H1 (cell line): ENCODE measurements at regions of chr20 and their contacts with region 1.

Region 1: GRCh38 chr20:9903048-9903655 is 64.3 kb upstream of the PAK5 start:
- DNase-seq: peak in 1 of 2 experiments; percentile 60
- H3K4me3 ChIP-seq: no peak overlapping the region
- H3K27ac ChIP-seq: no peak overlapping the region
- H3K4me1 ChIP-seq: no peaks in the 10 kb centered on the region
- H3K27me3 ChIP-seq: no peaks in the 10 kb centered on the region
- CTCF ChIP-seq: peak in 2 of 3 experiments; percentile 68 to 81; a peak in 3 of 4 replicates
- EP300 ChIP-seq: no peak
- POLR2A ChIP-seq: no peak
- RAD21 ChIP-seq: peak; percentile 46 to 61; a peak in 3 of 4 replicates

Region 2: DNA sequence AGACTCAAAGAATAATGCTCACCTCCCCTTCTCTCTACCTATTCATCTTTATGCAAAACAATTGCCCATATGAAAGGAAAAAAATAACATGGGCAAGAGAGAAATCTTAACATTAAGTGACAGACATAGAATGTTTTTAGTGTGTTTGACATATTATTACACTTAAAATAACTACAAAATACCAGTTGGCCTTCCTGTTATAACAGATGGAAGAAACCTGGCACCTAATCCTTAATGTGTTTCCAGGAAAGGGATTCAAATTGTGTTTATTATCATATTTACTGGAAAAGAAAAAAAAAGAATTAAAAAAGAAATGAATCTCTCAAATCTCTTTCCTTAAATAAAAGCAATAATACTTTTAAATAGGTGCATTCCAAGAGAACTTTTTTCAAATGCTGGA is 230.2 kb before region 1 on chr20:
- CTCF ChIA-PET with region 1: interaction called, 10 read pairs
- POLR2A ChIA-PET with region 1: no interaction called
- DNase-seq: no peak
- H3K4me3 ChIP-seq: no peak overlapping the region
- H3K27ac ChIP-seq: no peak overlapping the region
- H3K4me1 ChIP-seq: no peaks in the 10 kb centered on the region
- H3K27me3 ChIP-seq: no peaks in the 10 kb centered on the region
- CTCF ChIP-seq: no peak
- EP300 ChIP-seq: no peak
- POLR2A ChIP-seq: no peak
- RAD21 ChIP-seq: no peak

Region 3: GRCh38 chr20:9800421-9800820 is 102.7 kb before region 1 on chr20:
- CTCF ChIA-PET with region 1: no interaction called
- POLR2A ChIA-PET with region 1: no interaction called
- DNase-seq: no peak
- H3K4me3 ChIP-seq: no peak overlapping the region
- H3K27ac ChIP-seq: no peak overlapping the region
- H3K4me1 ChIP-seq: no peaks in the 10 kb centered on the region
- H3K27me3 ChIP-seq: no peaks in the 10 kb centered on the region
- CTCF ChIP-seq: no peak
- EP300 ChIP-seq: no peak
- POLR2A ChIP-seq: no peak
- RAD21 ChIP-seq: no peak

Region 4: DNA sequence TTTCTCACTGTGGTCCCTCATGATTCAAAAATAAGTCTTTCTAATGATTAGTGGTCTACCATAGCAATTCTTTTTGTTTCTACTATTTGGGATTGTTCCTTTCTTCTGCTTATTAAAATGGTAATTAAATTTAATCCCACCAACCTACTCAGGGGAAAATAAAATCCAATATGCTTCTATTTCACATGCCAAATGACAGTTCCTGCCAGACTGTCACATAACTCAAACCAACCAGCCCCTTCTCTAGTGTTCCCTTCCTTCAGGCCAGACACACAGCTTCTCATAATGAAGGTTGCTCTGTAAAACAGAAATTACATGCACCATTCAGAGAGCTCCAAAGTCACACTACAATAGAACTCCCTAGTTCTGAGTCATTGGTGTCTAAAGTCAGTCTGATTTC is 87.5 kb before region 1 on chr20:
- CTCF ChIA-PET with region 1: interaction called, 10 read pairs
- POLR2A ChIA-PET with region 1: no interaction called
- DNase-seq: no peak
- H3K4me3 ChIP-seq: no peak overlapping the region
- H3K27ac ChIP-seq: no peak overlapping the region
- H3K4me1 ChIP-seq: no peaks in the 10 kb centered on the region
- H3K27me3 ChIP-seq: no peaks in the 10 kb centered on the region
- CTCF ChIP-seq: no peak
- EP300 ChIP-seq: no peak
- POLR2A ChIP-seq: no peak
- RAD21 ChIP-seq: no peak

Region 5: DNA sequence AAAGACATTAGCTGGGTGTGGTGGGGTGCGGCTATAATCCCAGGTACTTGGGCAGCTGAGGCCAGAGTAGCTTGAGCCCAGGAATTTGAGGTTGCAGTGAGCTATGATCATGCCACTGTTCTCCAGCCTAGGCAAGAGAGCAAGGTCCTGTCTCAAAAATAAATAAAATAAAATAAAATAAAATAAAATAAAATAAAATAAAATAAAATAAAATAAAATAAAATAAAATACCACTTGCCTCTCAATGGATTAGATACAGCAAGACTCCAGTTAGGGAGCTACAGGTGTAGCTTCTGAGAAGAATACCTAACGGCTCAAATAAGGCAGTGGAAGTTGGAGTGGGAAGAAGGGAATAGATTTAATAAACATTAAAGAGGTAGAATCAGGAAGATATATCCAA is 50.6 kb before region 1 on chr20:
- CTCF ChIA-PET with region 1: interaction called, 10 read pairs
- POLR2A ChIA-PET with region 1: no interaction called
- DNase-seq: no peak
- H3K4me3 ChIP-seq: no peak overlapping the region
- H3K27ac ChIP-seq: no peak overlapping the region
- H3K4me1 ChIP-seq: no peaks in the 10 kb centered on the region
- H3K27me3 ChIP-seq: no peaks in the 10 kb centered on the region
- CTCF ChIP-seq: no peak
- EP300 ChIP-seq: no peak
- POLR2A ChIP-seq: no peak
- RAD21 ChIP-seq: no peak

Region 6: DNA sequence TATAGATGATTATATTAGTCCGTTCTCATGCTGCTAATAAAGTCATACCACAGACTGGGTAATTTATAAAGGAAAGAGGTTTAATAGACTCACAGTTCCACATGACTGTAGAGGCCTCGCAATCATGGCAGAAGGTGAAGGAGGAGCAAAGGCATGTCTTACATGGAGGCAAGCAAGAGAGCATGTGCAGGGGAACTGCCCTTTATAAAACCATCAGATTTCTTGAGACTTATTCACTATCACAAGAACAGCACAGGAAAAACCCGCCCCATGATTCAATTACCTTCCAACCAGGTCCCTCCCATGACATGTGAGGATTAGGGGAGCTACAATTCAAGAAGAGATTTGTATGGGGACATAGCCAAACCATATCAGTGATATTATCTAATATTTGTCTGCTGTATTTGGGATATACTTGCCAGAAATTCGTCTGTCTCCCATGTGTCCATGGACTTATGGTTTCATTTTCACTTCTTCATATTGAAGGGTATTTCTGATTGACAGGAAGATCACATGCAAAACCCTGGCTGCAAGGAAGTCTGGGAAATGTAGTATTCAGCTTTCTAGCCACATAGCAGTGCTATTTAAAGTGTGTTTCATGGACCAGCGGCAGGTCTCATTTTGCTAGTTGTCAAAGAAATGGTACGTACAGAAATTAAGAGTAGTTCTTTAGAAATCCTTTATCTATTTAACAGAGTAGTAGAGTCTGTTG is 13.7 kb before region 1 on chr20:
- CTCF ChIA-PET with region 1: interaction called, 34 read pairs
- POLR2A ChIA-PET with region 1: no interaction called
- DNase-seq: no peak
- H3K4me3 ChIP-seq: no peak overlapping the region
- H3K27ac ChIP-seq: no peak overlapping the region
- H3K4me1 ChIP-seq: no peaks in the 10 kb centered on the region
- H3K27me3 ChIP-seq: no peaks in the 10 kb centered on the region
- CTCF ChIP-seq: no peak
- EP300 ChIP-seq: no peak
- POLR2A ChIP-seq: no peak
- RAD21 ChIP-seq: no peak

Region 7: DNA sequence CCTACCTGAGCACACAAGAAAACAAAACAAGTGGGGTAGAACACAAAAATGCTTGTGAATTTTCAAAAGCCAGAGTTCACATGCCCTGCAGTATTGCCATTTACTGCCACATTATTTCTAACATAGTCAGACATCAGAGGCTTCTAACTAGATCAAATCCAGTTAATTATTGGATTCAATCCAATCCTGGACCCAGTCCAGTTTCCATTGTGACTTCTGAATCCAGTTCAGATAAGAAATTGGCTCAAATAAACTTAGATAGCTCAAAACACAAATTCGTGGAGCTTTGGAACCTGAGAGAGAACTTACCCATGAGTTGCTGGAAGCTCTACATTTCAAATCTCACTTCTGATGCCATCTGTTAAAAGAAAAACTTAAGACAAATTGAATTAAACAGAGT is 46.4 kb after region 1 on chr20:
- CTCF ChIA-PET with region 1: interaction called, 13 read pairs
- POLR2A ChIA-PET with region 1: no interaction called
- DNase-seq: no peak
- H3K4me3 ChIP-seq: no peak overlapping the region
- H3K27ac ChIP-seq: no peak overlapping the region
- H3K4me1 ChIP-seq: no peaks in the 10 kb centered on the region
- H3K27me3 ChIP-seq: no peaks in the 10 kb centered on the region
- CTCF ChIP-seq: no peak
- EP300 ChIP-seq: no peak
- POLR2A ChIP-seq: no peak
- RAD21 ChIP-seq: no peak

Region 8: DNA sequence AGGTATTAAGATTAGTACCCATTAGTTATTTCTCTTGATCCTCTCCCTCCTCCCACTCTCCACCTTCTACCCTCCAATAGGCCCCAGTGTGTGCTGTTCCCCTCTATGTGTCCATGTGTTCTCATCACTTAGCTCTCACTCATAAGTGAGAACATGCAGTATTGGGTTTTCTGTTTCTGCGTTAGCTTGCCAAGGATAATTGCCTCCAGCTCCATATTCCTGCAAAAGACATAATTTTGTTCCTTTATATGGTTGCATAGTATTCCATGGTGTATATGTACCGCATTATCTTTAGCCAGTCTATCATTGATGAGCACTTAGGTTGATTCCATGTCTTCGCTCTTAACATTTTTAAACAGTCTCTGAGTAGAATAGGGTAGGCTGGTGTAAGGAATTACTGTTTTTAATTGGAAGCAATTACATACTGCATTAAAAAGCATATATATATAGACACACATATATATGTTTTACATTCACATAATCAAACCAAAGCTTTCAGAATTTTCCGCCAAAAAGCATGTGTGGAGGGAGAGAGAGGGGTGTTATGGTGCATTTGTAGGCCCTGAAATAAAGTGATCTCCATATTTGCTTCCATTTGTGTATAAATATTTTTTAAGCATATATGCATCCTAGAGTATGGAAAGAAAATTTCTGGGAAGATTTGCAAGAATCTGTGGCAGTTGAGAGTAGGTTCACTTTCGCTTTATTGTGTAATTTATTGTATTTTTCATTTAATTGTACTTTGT is 130.9 kb after region 1 on chr20:
- CTCF ChIA-PET with region 1: no interaction called
- POLR2A ChIA-PET with region 1: no interaction called
- DNase-seq: no peak
- H3K4me3 ChIP-seq: no peak overlapping the region
- H3K27ac ChIP-seq: no peak overlapping the region
- H3K4me1 ChIP-seq: peaks cover 0 to 3% (median 1%) of the 10 kb centered on the region in 4 experiments; a peak in 2 of 7 replicates
- H3K27me3 ChIP-seq: no peaks in the 10 kb centered on the region
- CTCF ChIP-seq: no peak
- EP300 ChIP-seq: no peak
- POLR2A ChIP-seq: no peak
- RAD21 ChIP-seq: no peak